Activated CD8-positive, alpha-beta memory T cell treated with anti-CD3 and anti-CD28 coated beads, Interleukin-2, amount 10 ng/mL, durations not matched to agents 7 days and 5 days (primary cell): ENCODE measurements at regions of chr6 and their contacts with region 1.

Region 1: GRCh38 chr6:33248925-33249731 is 22.5 kb downstream of the VPS52 start:
- DNase-seq: peak; percentile 99
- ATAC-seq: peak; percentile 93
- H3K4me3 Mint-ChIP-seq: peak overlapping the region; percentile 90
- H3K27ac Mint-ChIP-seq: peak overlapping the region; percentile 94
- H3K4me1 Mint-ChIP-seq: peaks cover 37% of the 10 kb centered on the region
- H3K27me3 Mint-ChIP-seq: peaks cover 10% of the 10 kb centered on the region

Region 2: DNA sequence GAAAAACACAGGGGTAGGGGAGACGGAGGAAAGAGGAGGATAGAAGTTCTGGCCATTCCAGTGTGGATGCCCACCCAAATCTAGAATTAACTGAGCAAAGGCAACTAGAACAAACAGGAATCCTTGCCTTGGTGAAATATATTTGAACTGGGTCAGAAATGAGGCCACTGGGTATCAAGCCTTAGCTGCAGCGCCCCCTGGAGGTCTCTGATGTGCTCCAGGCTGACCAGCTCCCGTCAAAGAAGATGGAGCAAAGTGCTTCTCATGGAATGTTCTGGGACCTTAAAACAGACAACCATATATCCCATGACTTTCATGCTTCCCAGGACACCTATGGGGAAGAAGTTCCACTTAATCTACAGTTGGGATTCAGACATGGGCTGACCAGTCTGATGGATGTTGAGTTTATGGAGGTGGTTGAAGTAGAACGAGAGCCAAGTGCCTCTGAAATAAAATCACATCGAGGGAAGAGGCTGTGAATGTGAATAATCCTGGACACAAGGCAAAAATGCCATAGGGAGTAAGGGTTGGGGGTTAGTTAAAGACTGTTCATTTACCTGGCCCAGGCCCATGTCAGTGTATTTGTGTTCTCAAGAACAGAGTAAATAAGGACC is 122.9 kb before region 1 on chr6:
- CTCF ChIA-PET with region 1: interaction called, 47 read pairs
- DNase-seq: peak; percentile 73
- ATAC-seq: peak; percentile 56
- H3K4me3 Mint-ChIP-seq: no peak overlapping the region
- H3K27ac Mint-ChIP-seq: no peak overlapping the region
- H3K4me1 Mint-ChIP-seq: peaks cover 21% of the 10 kb centered on the region
- H3K27me3 Mint-ChIP-seq: peaks cover 23% of the 10 kb centered on the region

Region 3: DNA sequence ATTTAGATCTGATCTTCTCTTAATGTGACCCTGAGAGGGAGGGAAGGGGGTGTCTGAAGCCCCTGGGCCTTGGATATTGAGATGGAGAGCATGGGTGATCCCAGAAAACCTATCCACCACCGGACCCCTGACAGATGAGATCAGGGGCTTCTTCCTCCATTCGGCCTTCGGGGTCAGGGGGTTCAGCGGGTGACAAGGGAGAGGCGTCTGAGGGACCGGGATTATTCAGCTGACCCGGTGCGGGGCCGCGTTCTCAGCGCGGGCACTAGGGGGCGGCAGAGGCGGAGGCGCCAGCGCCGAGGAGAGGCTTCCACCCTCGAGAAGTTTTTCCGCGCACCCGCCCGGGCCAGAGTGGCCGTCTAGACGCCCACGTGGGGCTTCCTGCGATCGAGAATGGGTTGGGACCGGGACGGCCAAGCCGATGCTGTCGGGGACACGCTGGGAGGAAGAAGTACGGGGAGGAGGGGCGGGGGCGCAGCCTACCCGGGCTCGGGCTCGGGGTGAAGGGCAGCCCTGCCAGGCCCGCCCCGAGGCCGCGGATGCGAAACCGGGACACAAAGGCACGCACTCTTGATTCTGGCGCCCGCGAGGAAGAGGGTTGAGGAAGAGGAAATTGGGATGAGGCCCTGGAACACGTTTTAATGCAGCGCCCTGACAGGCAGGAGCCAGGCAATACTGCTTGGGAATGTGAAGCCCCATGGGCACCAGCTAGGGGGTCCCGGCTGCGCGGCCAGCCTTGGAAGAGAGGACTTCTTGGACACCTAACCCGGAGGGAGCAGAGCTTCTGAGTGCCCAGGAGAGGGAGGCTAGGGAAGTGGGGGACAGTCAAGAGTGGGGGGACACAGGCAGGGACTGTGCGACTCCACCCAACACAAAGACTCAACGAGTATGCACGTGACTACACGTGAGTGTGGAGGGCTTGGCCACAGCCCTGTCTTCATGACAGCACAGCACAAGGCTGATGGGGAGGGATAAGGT is 87.5 kb before region 1 on chr6:
- CTCF ChIA-PET with region 1: interaction called, 108 read pairs
- DNase-seq: peak; percentile 86
- ATAC-seq: peak; percentile 98
- H3K4me3 Mint-ChIP-seq: peak overlapping the region; percentile 76
- H3K27ac Mint-ChIP-seq: peak overlapping the region; percentile 74
- H3K4me1 Mint-ChIP-seq: peaks cover 16% of the 10 kb centered on the region
- H3K27me3 Mint-ChIP-seq: peaks cover under 1% of the 10 kb centered on the region

Region 4: DNA sequence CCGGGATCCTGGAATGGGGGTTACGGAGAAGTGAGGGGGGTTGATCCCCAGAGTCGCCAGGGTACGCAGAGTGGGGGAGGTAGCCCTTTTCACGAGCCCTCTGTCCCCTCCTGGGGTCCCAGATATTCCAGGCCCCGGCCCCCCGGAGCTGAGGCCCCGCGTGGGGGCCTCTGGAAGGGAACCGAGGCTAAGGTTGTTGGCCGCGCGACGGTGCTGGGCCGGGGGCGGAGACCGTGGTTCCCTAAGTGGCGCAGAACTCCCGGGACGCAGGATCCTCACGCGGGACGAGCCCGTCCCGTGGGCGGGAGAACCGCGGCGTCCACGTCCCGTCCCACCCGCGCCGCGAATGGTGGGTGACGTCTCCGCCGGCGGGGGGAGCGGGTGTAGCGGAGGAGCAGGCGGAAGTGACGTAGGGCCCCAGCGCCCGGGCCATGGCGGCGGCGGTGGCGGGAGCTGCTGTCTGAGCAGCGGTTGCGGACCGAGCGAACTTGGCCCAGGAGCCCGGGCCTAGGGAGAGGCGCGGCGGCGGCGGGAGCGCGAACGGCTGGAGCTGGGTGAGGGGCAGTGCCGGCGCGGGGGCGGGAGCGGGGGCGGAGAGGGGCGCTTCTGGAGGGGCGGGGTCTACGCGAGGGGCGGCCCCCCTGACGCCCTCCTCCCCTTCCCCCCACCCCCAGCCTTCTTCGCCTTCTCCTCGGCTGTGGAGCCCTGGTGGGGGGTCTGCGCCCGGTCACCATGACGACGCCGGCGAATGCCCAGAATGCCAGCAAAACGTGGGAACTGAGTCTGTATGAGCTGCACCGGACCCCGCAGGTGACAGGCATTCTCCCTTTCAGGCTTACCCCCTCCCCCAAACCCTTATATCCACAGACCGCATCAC is 40.8 kb before region 1 on chr6 and contains the start of gene RING1:
- CTCF ChIA-PET with region 1: interaction called, 35 read pairs
- DNase-seq: peak; percentile 89
- ATAC-seq: peak; percentile 57
- H3K4me3 Mint-ChIP-seq: peak within 1 kb of the TSS; percentile 82
- H3K27ac Mint-ChIP-seq: peak within 1 kb of the TSS; percentile 85
- H3K4me1 Mint-ChIP-seq: peaks cover 55% of the 10 kb centered on the region
- H3K27me3 Mint-ChIP-seq: peaks cover 10% of the 10 kb centered on the region
- total RNA-seq, gene RING1: 32.6 to 37.8 TPM

Region 5: GRCh38 chr6:33271458-33272274 is 22.5 kb after region 1 on chr6 and contains the starts of genes RPS18 and VPS52:
- CTCF ChIA-PET with region 1: interaction called, 33 read pairs
- DNase-seq: peak; percentile 96
- ATAC-seq: peak; percentile 90
- H3K4me3 Mint-ChIP-seq: peak within 1 kb of the TSS; percentile 88
- H3K27ac Mint-ChIP-seq: peak within 1 kb of the TSS; percentile 98
- H3K4me1 Mint-ChIP-seq: peaks cover 58% of the 10 kb centered on the region
- H3K27me3 Mint-ChIP-seq: no peaks in the 10 kb centered on the region
- total RNA-seq, gene RPS18: 2,808 to 3,161 TPM
- total RNA-seq, gene VPS52: 60.6 to 63.3 TPM

Region 6: GRCh38 chr6:33513213-33513612 is 264.1 kb after region 1 on chr6:
- CTCF ChIA-PET with region 1: no interaction called
- DNase-seq: no peak
- ATAC-seq: no peak
- H3K4me3 Mint-ChIP-seq: no peak overlapping the region
- H3K27ac Mint-ChIP-seq: no peak overlapping the region
- H3K4me1 Mint-ChIP-seq: peaks cover 25% of the 10 kb centered on the region
- H3K27me3 Mint-ChIP-seq: peaks cover 18% of the 10 kb centered on the region